Endothelial cell of umbilical vein (primary cell): ENCODE measurements at regions of chr4 and their contacts with region 1.

Region 1: GRCh38 chr4:105708530-105709391 is at the starts of genes GSTCD and INTS12:
- DNase-seq: peak; percentile 95
- H3K4me3 ChIP-seq: peak within 1 kb of the TSS; percentile 46 to 93 (median 93)
- H3K27ac ChIP-seq: peak within 1 kb of the TSS; percentile 61
- H3K4me1 ChIP-seq: peaks cover 16% of the 10 kb centered on the region
- H3K27me3 ChIP-seq: no peaks in the 10 kb centered on the region
- CTCF ChIP-seq: peak in 1 of 2 donors; percentile 0
- POLR2A ChIP-seq: peak; percentile 89
- total RNA-seq, gene GSTCD: 11.3 and 13.1 TPM in 2 replicates
- total RNA-seq, gene INTS12: 19.5 and 19.7 TPM in 2 replicates

Region 2: GRCh38 chr4:106201373-106201772 is 492.6 kb after region 1 on chr4:
- CTCF ChIA-PET with region 1: interaction called, 26 read pairs
- POLR2A ChIA-PET with region 1: no interaction called
- dilution Hi-C with region 1: no loop called
- intact Hi-C with region 1: loop called (anchors 1 kb)
- DNase-seq: peak; percentile 31
- H3K4me3 ChIP-seq: no peak overlapping the region
- H3K27ac ChIP-seq: no peak overlapping the region
- H3K4me1 ChIP-seq: no peaks in the 10 kb centered on the region
- H3K27me3 ChIP-seq: no peaks in the 10 kb centered on the region
- CTCF ChIP-seq: peak; percentile 26 to 35
- POLR2A ChIP-seq: no peak